ENCODE measurements at regions of chr16 and their contacts with region 1.

Region 1: DNA sequence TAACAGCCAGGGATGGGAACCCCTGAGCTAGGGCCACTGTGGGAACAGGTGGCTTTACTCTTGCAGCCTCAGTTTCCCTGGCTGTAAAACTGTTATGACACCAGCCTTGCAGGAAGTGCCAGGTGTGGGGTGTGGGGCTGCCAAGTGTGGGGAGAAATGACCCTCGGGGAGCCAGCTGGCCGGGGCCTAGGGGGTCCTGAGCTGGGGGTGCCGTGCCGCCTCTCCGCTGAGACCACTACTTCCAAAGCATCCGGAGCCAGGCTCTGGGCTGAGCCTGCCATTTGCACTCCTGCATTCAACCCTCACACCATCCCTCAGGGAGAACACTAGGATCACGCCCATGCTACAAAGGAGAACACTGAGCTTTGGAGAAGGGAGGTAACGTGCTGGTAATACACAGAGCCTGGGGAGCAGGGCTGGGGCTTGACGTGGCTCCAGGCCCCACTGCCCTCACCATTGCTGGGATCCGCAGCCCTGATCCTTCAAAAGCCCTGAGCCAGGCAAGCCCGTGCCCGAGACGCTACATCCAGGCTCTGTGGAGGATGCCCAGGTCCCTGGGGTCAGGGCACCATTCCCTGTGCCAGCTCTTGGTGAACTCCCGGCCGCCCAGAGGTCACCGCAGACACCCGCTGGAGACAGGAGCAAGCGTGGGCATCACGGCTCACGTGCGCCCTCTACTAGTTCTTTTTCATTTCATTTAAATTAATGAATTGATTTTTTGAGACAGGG is 28.8 kb upstream of the GINS2 start:
- DNase-seq: peak; percentile 53 to 73
- H3K4me3 ChIP-seq: no peak overlapping the region
- H3K27ac ChIP-seq: peak overlapping the region; percentile 80 to 81
- H3K4me1 ChIP-seq: peaks cover 10 to 21% of the 10 kb centered on the region in 2 donors
- H3K27me3 ChIP-seq: no peaks in the 10 kb centered on the region
- CTCF ChIP-seq: peak; percentile 61 to 81 (median 75)
- POLR2A ChIP-seq: no peak

Region 2: DNA sequence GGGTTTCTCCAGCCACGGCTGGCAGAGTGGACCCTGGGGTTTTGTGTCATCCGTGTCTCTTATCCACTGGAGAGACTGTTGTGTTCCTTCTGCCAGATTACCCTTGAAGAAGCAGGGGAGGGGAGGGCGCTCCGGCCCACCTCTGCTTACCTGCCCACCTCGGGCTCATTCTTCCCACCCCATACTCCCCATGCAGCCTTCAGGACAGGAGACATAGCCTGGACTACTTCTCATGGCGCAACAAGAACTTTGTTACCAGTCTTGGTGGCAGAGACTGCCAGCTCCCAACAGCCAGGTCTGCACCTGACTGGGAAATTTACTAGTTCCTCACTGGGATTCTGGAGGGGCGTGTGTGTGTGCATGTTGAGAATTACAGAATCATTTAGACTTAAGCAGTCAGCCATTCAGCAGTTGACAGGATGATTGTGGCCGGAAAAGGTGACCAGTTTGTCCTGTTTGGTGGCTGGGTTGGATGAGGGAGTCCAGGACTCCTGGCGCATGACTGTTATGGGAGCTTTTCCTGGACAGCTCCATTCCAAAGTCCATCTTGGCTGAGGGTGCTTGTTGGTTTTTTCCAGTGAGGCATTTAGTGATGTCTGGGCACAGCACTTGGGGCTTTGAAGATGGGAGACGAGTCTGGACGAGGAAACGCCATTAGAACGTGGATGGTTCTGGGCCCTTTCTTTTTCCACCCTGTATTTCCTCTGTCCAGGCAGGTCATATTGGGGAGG is 95.7 kb before region 1 on chr16:
- intact Hi-C with region 1: loop called (anchors 2 kb)
- DNase-seq: peak in 1 of 2 donors; percentile 73
- H3K4me3 ChIP-seq: no peak overlapping the region
- H3K27ac ChIP-seq: peak overlapping the region; percentile 53 to 64
- H3K4me1 ChIP-seq: peaks cover 0 to 15% of the 10 kb centered on the region in 2 donors
- H3K27me3 ChIP-seq: no peaks in the 10 kb centered on the region
- CTCF ChIP-seq: no peak
- POLR2A ChIP-seq: no peak

Region 3: GRCh38 chr16:85639536-85640253 is 77.9 kb before region 1 on chr16:
- intact Hi-C with region 1: no loop called
- DNase-seq: peak; percentile 53 to 73
- H3K4me3 ChIP-seq: no peak overlapping the region
- H3K27ac ChIP-seq: peak overlapping the region; percentile 10 to 20
- H3K4me1 ChIP-seq: peaks cover 0 to 19% of the 10 kb centered on the region in 2 donors
- H3K27me3 ChIP-seq: no peaks in the 10 kb centered on the region
- CTCF ChIP-seq: peak in 1 of 3 donors; percentile 13
- POLR2A ChIP-seq: no peak

Region 4: DNA sequence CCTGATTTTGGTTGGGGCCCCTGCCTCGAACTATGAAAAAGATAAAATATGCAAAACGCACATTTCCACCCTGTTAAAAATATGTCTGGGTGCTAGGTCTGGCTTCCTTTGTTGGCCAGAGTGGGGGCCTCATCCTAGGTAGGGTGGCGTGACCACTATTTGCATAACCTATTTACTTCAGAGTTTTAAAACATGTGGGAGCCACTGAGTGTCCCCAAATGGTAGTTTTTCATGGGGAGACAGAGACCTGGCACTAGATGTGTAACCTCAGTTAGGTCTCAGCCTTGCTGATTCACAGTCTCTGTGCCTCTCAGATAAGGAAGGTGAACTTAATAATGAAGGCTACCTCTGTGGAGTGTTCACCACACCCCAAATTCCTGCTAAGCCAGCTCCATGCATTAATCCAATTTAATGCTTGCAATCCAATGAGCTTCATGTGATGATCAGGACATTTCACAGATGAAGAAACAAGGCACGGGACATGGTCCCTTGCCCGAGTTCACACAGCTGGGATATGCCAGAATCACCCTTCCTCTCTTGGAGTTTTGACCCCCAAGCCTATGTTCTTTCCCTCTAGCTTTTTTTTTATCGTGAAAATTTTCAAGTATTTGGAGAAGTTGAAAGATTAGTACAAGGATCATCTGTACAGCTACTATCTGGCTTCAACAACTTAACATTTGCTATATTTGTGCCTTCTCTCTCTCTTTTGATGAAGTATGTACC is 284.8 kb after region 1 on chr16:
- intact Hi-C with region 1: no loop called
- DNase-seq: no peak
- H3K4me3 ChIP-seq: no peak overlapping the region
- H3K27ac ChIP-seq: no peak overlapping the region
- H3K4me1 ChIP-seq: no peaks in the 10 kb centered on the region
- H3K27me3 ChIP-seq: peaks cover 0 to 3% of the 10 kb centered on the region in 2 donors
- CTCF ChIP-seq: no peak
- POLR2A ChIP-seq: no peak

Region 5: DNA sequence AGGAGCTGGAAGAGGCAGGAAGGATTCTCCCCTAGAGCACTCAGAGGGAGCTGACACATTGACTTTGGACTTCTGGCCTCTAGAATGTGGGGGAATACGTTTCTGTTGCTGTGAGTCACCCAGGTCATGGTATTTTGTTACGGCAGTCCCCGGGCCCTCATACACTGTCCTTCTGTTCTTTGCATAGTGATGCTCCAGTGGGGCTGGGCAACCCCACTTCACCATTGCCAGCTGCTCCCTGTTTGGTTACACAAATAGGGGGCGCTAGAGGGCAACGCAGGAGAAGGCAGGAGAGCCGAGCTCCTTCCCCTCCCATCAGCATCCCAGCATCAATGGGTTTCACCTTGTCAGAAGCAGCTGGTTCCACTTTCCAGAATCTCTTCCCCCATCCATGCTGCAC is 535.0 kb after region 1 on chr16:
- intact Hi-C with region 1: no loop called
- DNase-seq: no peak
- H3K4me3 ChIP-seq: no peak overlapping the region
- H3K27ac ChIP-seq: no peak overlapping the region
- H3K4me1 ChIP-seq: no peaks in the 10 kb centered on the region
- H3K27me3 ChIP-seq: peaks cover 0 to 13% of the 10 kb centered on the region in 2 donors
- CTCF ChIP-seq: no peak
- POLR2A ChIP-seq: no peak

Measured in breast epithelium (tissue), 4 donors.